ENCODE measurements at regions of chr1 and their contacts with region 1.

Region 1: DNA sequence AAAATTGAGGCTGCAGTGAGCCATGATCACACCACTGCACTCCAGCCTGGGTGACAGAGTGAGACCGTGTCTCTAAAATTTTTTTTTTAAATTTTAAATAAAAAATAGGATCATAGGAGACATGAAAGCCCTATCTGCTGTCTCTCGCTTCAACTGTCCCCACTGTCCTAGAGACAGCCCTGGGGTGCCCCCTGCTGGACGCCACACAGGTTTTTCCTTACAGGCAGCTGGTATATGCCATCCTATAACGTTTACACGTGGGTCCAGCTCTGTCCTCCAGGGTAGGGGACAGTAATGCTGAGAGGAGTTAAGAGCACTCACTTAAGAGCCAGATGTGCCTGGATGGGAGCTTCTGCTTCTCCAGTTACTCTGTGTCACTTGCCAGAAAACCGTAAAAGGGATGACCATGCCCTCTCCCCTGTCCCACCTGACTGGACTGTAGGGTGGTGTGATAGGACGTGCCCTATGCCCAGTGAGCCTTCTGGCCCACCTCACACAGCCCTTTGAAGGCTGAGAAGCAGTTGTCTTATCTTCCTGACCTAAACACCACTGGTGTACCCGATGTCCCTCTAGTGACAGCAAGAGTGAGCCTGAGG is 8.5 kb downstream of the FBXO2 start:
- DNase-seq: peak; percentile 65
- ATAC-seq: peak; percentile 78
- H3K4me3 ChIP-seq: no peak overlapping the region
- H3K27ac ChIP-seq: no peak overlapping the region
- H3K4me1 ChIP-seq: peaks cover 39% of the 10 kb centered on the region
- H3K27me3 ChIP-seq: no peaks in the 10 kb centered on the region
- CTCF ChIP-seq: peak; percentile 77
- EP300 ChIP-seq: no peak
- POLR2A ChIP-seq: no peak
- RAD21 ChIP-seq: 0 out of 2 replicates have a peak, but pooled peaks have one; percentile 24

Region 2: DNA sequence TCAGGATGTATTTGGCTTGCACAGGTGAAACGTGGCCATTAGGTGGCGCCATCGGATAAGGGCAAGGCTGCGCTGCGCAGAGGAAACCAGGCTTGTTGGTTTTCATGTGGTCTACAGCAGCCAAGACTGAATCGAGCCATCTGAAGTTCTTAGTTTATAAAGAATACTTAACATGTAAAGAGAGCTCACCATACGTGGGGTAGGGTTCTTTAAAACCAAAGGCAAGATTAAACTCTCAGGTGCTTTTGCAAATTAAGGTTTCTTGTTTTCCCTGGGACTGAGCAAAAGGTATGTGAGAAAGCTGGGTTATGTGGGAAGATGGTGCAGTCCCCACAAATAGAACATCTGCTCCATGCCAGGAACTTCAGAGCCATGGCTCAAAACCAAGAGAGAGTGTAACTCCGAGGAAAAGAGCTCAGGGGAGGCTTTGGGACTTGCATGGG is 608.0 kb before region 1 on chr1:
- CTCF ChIA-PET with region 1: interaction called, 3 read pairs
- POLR2A ChIA-PET with region 1: no interaction called
- in situ Hi-C with region 1: loop called (anchors 25 kb)
- intact Hi-C with region 1: no loop called
- DNase-seq: peak; percentile 67
- ATAC-seq: peak; percentile 85
- H3K4me3 ChIP-seq: no peak overlapping the region
- H3K27ac ChIP-seq: no peak overlapping the region
- H3K4me1 ChIP-seq: no peaks in the 10 kb centered on the region
- H3K27me3 ChIP-seq: no peaks in the 10 kb centered on the region
- CTCF ChIP-seq: peak; percentile 96
- EP300 ChIP-seq: no peak
- POLR2A ChIP-seq: no peak
- RAD21 ChIP-seq: peak; percentile 94

Region 3: GRCh38 chr1:11248155-11248554 is 397.6 kb before region 1 on chr1:
- CTCF ChIA-PET with region 1: no interaction called
- POLR2A ChIA-PET with region 1: no interaction called
- in situ Hi-C with region 1: loop called (anchors 10 kb)
- intact Hi-C with region 1: no loop called
- DNase-seq: no peak
- ATAC-seq: peak; percentile 31; the same call in 1 of the 3 replicates
- H3K4me3 ChIP-seq: no peak overlapping the region
- H3K27ac ChIP-seq: no peak overlapping the region
- H3K4me1 ChIP-seq: no peaks in the 10 kb centered on the region
- H3K27me3 ChIP-seq: no peaks in the 10 kb centered on the region
- CTCF ChIP-seq: no peak; the same call in 1 of the 2 replicates
- EP300 ChIP-seq: no peak
- POLR2A ChIP-seq: no peak
- RAD21 ChIP-seq: no peak

Region 4: GRCh38 chr1:11337580-11338073 is 308.1 kb before region 1 on chr1:
- CTCF ChIA-PET with region 1: interaction called, 19 read pairs
- POLR2A ChIA-PET with region 1: no interaction called
- in situ Hi-C with region 1: loop called (anchors 5 kb)
- intact Hi-C with region 1: loop called (anchors 1 kb)
- DNase-seq: peak; percentile 23
- ATAC-seq: peak; percentile 85
- H3K4me3 ChIP-seq: no peak overlapping the region
- H3K27ac ChIP-seq: no peak overlapping the region
- H3K4me1 ChIP-seq: 0 out of 2 replicates have a peak, but pooled peaks cover 5% of the 10 kb centered on the region
- H3K27me3 ChIP-seq: peaks cover 9 to 51% of the 10 kb centered on the region in 2 experiments; a peak in 4 of 5 replicates
- CTCF ChIP-seq: peak; percentile 78
- EP300 ChIP-seq: no peak
- POLR2A ChIP-seq: no peak
- RAD21 ChIP-seq: peak; percentile 36; the same call in 1 of the 2 replicates

Region 5: GRCh38 chr1:11622398-11622797 is 23.4 kb before region 1 on chr1:
- CTCF ChIA-PET with region 1: no interaction called
- POLR2A ChIA-PET with region 1: no interaction called
- in situ Hi-C with region 1: no loop called
- intact Hi-C with region 1: no loop called
- DNase-seq: no peak
- ATAC-seq: no peak; the same call in 2 of the 3 replicates
- H3K4me3 ChIP-seq: no peak overlapping the region
- H3K27ac ChIP-seq: no peak overlapping the region
- H3K4me1 ChIP-seq: no peaks in the 10 kb centered on the region
- H3K27me3 ChIP-seq: peaks cover 5 to 46% of the 10 kb centered on the region in 2 experiments; a peak in 4 of 5 replicates
- CTCF ChIP-seq: no peak
- EP300 ChIP-seq: no peak
- POLR2A ChIP-seq: no peak
- RAD21 ChIP-seq: no peak

Region 6: DNA sequence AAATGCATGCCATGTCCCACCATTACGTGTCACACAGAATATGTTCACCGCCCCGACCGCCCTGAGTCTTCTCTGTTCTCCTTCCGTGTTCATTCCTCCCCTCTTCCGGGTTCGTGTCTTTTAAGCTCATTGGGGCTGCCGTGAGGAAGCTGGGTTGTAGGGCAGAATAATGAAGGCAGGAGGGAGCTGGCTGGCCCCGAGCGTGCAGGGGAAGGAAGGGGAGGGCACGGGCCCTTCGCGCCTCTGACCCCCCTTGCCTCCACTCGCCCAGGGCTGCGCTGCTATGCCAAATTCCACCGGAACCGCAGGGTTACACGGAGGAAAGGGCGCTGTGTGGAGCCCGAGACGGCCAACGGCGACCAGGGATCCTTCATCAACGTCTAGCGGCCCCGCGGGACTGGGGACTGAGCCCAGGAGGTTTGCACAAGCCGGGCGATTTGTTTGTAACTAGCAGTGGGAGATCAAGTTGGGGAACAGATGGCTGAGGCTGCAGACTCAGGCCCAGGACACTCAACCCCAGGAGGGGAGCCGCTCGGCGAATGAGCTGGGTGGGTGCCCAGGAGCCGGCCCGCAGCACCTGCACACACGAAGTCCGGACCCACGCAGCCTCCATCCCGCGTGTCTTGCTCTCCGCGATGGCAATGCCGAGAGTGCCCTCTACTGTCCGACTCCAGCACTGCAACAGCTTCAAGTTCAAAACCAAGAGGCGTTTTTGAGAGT is 73.7 kb after region 1 on chr1:
- CTCF ChIA-PET with region 1: interaction called, 7 read pairs
- POLR2A ChIA-PET with region 1: no interaction called
- in situ Hi-C with region 1: no loop called
- intact Hi-C with region 1: loop called (anchors 5 kb)
- DNase-seq: no peak
- ATAC-seq: peak; percentile 68
- H3K4me3 ChIP-seq: peak overlapping the region; percentile 44 to 72 (median 46); a peak in 5 of 6 replicates
- H3K27ac ChIP-seq: no peak overlapping the region
- H3K4me1 ChIP-seq: peaks cover 11% of the 10 kb centered on the region
- H3K27me3 ChIP-seq: peaks cover 6 to 40% of the 10 kb centered on the region in 2 experiments; a peak in 4 of 5 replicates
- CTCF ChIP-seq: peak; percentile 95
- EP300 ChIP-seq: no peak
- POLR2A ChIP-seq: no peak
- RAD21 ChIP-seq: peak; percentile 88

Region 7: GRCh38 chr1:11805447-11806306 is 159.9 kb after region 1 on chr1 and contains the starts of genes CLCN6 and MTHFR:
- CTCF ChIA-PET with region 1: no interaction called
- POLR2A ChIA-PET with region 1: no interaction called
- in situ Hi-C with region 1: no loop called
- intact Hi-C with region 1: loop called (anchors 5 kb)
- DNase-seq: peak; percentile 98
- ATAC-seq: peak; percentile 92
- H3K4me3 ChIP-seq: peak within 1 kb of the TSS; percentile 86 to 88 (median 87)
- H3K27ac ChIP-seq: peak within 1 kb of the TSS; percentile 94
- H3K4me1 ChIP-seq: peaks cover 69% of the 10 kb centered on the region
- H3K27me3 ChIP-seq: no peaks in the 10 kb centered on the region; a peak in 1 of 5 replicates
- CTCF ChIP-seq: peak; percentile 18; the same call in 1 of the 2 replicates
- EP300 ChIP-seq: peak in 1 of 2 experiments; percentile 48; a peak in 1 of 4 replicates
- POLR2A ChIP-seq: peak; percentile 70 to 82
- RAD21 ChIP-seq: peak; percentile 55; the same call in 1 of the 2 replicates
- total RNA-seq, gene CLCN6: 10.1 and 19.3 TPM in 2 replicates
- total RNA-seq, gene MTHFR: 5.0 and 8.2 TPM in 2 replicates